ENCODE measurements at regions of chr16 and their contacts with region 1.

Region 1: GRCh38 chr16:53415504-53415903 is 18.8 kb upstream of the RBL2 start:
- DNase-seq: peak in 1 of 2 experiments; percentile 35
- H3K4me3 ChIP-seq: no peak overlapping the region
- H3K27ac ChIP-seq: no peak overlapping the region
- H3K4me1 ChIP-seq: peaks cover 25% of the 10 kb centered on the region
- H3K27me3 ChIP-seq: no peaks in the 10 kb centered on the region
- CTCF ChIP-seq: no peak; the same call in 1 of the 2 replicates

Region 2: GRCh38 chr16:53429221-53429943 is 13.9 kb after region 1 on chr16:
- CTCF ChIA-PET with region 1: no interaction called
- POLR2A ChIA-PET with region 1: no interaction called
- intact Hi-C with region 1: loop called (anchors 2 kb)
- DNase-seq: peak; percentile 66 to 76
- H3K4me3 ChIP-seq: peak overlapping the region; percentile 25; the same call in 1 of the 2 replicates
- H3K27ac ChIP-seq: peak overlapping the region; percentile 30; the same call in 1 of the 2 replicates
- H3K4me1 ChIP-seq: peaks cover 38% of the 10 kb centered on the region
- H3K27me3 ChIP-seq: no peaks in the 10 kb centered on the region
- CTCF ChIP-seq: no peak

Measured in PC-9 (cell line).